Stomach (tissue), 19 donors: ENCODE measurements at regions of chr11 and their contacts with region 1.

Region 1: DNA sequence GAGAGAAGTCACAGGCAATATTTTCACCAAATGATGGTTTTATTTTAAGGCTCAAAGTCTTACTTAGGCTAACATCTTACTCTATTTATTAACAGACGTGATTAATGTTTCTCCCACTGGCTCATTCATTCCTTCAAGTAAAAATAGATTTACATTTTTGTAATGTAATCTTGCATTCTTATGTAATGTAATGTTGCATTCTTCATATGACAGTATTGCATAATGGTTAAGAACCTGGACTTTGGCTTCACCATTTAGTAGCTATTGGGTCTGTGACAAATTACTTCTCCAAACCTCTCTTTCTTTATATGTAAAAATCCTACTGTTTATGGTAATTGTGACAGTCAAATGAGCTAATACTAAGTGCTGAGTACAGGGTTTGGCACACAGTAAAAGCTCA is 3.3 kb upstream of the DIXDC1 start:
- DNase-seq: no peak
- H3K4me3 ChIP-seq: no peak overlapping the region
- H3K27ac ChIP-seq: peak overlapping the region in 1 of 5 donors; percentile 87
- H3K4me1 ChIP-seq: peaks cover 21 to 52% (median 34%) of the 10 kb centered on the region in 4 donors
- H3K27me3 ChIP-seq: no peaks in the 10 kb centered on the region
- CTCF ChIP-seq: no peak
- EP300 ChIP-seq: no peak
- POLR2A ChIP-seq: no peak

Region 2: GRCh38 chr11:111479666-111480065 is 454.2 kb before region 1 on chr11:
- intact Hi-C with region 1: no loop called
- DNase-seq: no peak
- H3K4me3 ChIP-seq: no peak overlapping the region
- H3K27ac ChIP-seq: no peak overlapping the region
- H3K4me1 ChIP-seq: no peaks in the 10 kb centered on the region
- H3K27me3 ChIP-seq: no peaks in the 10 kb centered on the region
- CTCF ChIP-seq: no peak
- EP300 ChIP-seq: no peak
- POLR2A ChIP-seq: no peak

Region 3: DNA sequence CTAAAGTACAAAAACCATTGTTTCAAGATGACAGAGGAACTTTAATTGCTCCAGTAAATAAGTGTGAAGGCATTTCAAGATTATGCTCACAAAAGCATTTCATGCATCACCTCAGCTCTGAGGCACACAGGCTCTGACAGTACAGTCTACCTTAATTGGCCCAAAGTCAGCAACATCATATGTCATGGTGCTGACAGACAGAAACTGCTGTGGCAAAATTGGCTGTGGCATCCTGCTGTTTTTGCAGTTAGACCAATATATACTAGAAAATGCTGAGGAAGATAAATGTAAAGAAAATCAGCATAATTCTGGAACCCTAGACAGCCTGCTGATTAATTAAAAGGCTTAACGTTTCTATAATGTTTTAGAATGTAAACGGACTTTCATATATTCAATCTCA is 132.7 kb before region 1 on chr11:
- intact Hi-C with region 1: no loop called
- DNase-seq: no peak
- H3K4me3 ChIP-seq: no peak overlapping the region
- H3K27ac ChIP-seq: no peak overlapping the region
- H3K4me1 ChIP-seq: peaks cover 0 to 17% (median 0%) of the 10 kb centered on the region in 4 donors
- H3K27me3 ChIP-seq: no peaks in the 10 kb centered on the region
- CTCF ChIP-seq: no peak
- EP300 ChIP-seq: no peak
- POLR2A ChIP-seq: no peak

Region 4: GRCh38 chr11:111982019-111982464 is 48.2 kb after region 1 on chr11:
- intact Hi-C with region 1: loop called (anchors 5 kb)
- DNase-seq: peak; percentile 88 to 94
- H3K4me3 ChIP-seq: peak overlapping the region; percentile 22 to 35 (median 28)
- H3K27ac ChIP-seq: peak overlapping the region; percentile 65 to 93 (median 84)
- H3K4me1 ChIP-seq: peaks cover 27 to 95% (median 64%) of the 10 kb centered on the region in 4 donors
- H3K27me3 ChIP-seq: peaks cover 0 to 5% (median 0%) of the 10 kb centered on the region in 3 donors
- CTCF ChIP-seq: peak in 5 of 7 experiments; percentile 52 to 89 (median 61)
- EP300 ChIP-seq: no peak
- POLR2A ChIP-seq: no peak